Prostate gland (tissue), 2 donors: ENCODE measurements at regions of chr19 and their contacts with region 1.

Region 1: GRCh38 chr19:6862673-6863078 is 24.7 kb upstream of the ADGRE1 start:
- DNase-seq: peak; percentile 79
- H3K4me3 ChIP-seq: no peak overlapping the region
- H3K27ac ChIP-seq: peak overlapping the region; percentile 1 to 18
- H3K4me1 ChIP-seq: no peaks in the 10 kb centered on the region
- H3K27me3 ChIP-seq: no peaks in the 10 kb centered on the region
- CTCF ChIP-seq: peak; percentile 78 to 96 (median 92)
- POLR2A ChIP-seq: no peak

Region 2: DNA sequence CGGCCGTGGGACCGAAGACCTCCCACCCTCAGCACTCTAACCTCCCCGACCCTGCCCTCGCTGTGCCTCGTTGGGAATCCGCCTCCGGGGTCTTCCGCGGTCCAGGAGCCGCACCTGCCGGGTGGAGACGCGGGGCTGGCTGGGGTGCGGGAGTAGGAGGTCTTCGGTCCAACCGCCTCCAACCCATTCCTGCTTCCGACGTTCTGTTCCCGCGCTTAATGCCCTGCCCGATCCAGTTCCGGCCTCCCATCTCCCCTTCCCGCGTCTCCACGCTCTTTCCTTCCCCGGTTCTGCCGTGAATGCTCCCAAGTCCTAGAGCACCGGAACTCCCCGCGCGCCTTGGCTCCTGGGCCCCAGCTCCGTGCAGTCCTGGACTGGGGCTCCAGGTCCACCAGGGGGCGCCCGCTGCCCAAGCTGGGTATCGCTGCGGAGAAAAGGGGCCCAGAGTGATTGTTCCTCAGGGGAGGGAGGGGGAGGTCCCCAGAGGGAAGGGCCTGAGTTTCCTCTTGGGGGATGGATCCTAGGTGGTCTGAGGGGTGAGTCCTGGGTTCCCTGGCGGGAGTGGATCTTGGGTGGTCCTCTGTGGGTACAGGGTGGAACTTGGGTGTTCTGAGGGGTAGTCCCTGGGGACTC is 345.9 kb before region 1 on chr19:
- intact Hi-C with region 1: loop called (anchors 2 kb)
- DNase-seq: peak; percentile 85
- H3K4me3 ChIP-seq: peak overlapping the region; percentile 42 to 56
- H3K27ac ChIP-seq: peak overlapping the region; percentile 79 to 82
- H3K4me1 ChIP-seq: no peaks in the 10 kb centered on the region
- H3K27me3 ChIP-seq: no peaks in the 10 kb centered on the region
- CTCF ChIP-seq: peak; percentile 87 to 95 (median 88)
- POLR2A ChIP-seq: no peak

Region 3: DNA sequence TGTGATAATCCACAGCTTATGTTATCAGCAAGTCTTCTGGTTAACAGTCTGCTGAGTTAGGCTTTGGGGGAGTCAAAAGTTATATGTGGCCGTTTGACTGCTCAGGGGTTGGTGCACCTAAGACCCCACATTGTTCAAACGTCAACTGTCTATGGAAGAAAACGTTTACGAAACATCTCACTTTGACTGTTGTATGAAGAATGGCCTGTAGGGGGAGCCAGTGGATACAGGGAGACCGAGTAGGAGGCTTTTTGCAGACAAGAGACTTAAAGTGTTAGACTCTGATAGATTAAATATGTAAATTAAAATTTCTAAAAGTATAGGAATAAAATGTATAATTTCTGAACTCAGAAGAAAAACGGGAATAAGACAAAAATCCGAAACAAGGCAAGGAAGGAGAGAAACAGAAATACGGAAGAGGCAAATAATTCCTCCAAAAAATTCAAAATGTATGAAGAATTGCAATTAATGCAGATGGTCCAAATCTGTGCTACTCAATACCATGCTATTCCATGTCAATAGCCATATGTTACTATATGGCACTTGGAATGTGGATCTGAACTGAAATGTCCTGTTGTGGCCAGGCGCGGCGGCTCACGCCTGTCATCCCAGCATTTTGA is 230.6 kb before region 1 on chr19:
- intact Hi-C with region 1: loop called (anchors 2 kb)
- DNase-seq: peak; percentile 76
- H3K4me3 ChIP-seq: no peak overlapping the region
- H3K27ac ChIP-seq: no peak overlapping the region
- H3K4me1 ChIP-seq: no peaks in the 10 kb centered on the region
- H3K27me3 ChIP-seq: no peaks in the 10 kb centered on the region
- CTCF ChIP-seq: peak; percentile 55 to 82 (median 80)
- POLR2A ChIP-seq: no peak

Region 4: DNA sequence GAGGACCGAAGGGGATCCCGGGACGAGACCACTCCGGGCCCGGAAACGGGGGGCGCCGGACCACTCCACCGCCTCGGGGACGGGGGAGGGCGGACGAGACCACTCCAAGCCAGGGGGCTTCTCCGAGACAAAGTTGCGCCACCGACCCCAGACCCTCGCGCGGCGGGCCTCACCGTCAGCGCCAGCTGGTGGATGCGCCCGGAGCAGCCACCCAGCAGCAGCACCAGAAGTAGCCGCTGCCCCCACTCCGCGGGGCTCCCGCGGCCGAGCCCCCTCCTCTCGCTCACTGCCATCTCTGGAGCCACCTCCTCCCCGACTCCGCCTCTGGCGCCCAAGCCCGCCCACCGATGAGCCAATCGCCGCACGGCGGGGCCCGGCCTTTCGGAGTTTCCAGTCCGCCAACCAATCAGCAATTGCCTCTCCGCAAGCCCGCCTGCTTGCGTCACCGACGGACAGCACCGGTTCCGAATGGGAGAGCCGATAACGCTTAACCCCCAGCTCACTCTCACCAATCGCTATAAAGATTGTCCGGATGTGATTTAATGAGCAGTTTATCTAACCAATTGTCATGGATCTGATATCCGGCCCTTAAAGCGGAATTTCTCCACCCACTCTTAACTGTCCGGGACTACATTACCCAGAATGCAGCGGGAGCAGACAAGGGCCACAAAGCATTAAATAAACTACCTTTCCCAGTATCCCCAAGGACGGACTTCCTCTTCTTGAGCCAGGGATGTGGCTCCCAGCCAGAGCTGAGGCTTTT is 125.2 kb before region 1 on chr19 and contains the start of gene GPR108:
- intact Hi-C with region 1: loop called (anchors 5 kb)
- DNase-seq: peak; percentile 100
- H3K4me3 ChIP-seq: peak within 1 kb of the TSS; percentile 67 to 92
- H3K27ac ChIP-seq: peak within 1 kb of the TSS; percentile 93 to 97
- H3K4me1 ChIP-seq: peaks cover 16% of the 10 kb centered on the region
- H3K27me3 ChIP-seq: no peaks in the 10 kb centered on the region
- CTCF ChIP-seq: peak in 1 of 4 experiments; percentile 23
- POLR2A ChIP-seq: peak; percentile 80
- total RNA-seq, gene GPR108: 62.7 to 98.0 TPM